AG04449 (cell line): ENCODE measurements at regions of chr11 and their contacts with region 1.

Region 1: GRCh38 chr11:66386171-66387069 is 14.9 kb upstream of the SLC29A2 start:
- DNase-seq: no peak
- H3K4me3 ChIP-seq: peak overlapping the region; percentile 35
- CTCF ChIP-seq: peak; percentile 87

Region 2: GRCh38 chr11:66288671-66289547 is 97.5 kb before region 1 on chr11 and contains the start of gene YIF1A:
- CTCF ChIA-PET with region 1: interaction called, 11 read pairs
- POLR2A ChIA-PET with region 1: no interaction called
- DNase-seq: peak; percentile 98
- H3K4me3 ChIP-seq: peak within 1 kb of the TSS; percentile 82
- CTCF ChIP-seq: no peak

Region 3: DNA sequence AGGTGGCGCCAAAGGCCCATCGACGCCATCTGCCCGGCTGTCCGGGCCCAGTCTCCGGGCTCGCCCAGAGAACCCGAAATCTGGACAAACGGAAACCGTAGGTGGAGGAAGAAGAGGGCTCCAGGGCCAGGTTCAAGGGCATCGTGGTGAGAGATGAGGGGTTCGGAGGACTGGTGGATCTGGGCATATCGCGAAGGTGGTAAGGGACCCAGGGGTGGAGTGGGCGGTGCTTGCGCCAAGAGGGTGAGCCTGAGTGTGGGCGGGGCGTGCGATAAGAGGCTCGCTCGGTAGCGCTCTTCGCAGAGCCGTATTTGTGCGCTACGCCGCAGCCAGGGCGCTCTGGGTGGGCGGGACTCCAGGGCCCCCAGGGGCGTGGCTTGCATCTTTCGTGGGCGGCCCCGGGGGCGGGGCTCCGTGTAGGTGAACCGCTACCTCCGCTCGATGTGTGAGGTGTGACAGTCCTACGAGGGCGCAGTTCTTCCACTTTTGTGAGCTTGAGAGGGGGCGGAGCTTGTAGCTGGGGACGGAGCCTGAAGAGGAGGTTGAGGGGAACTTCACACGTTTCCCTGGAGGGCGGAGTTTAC is 74.4 kb before region 1 on chr11:
- CTCF ChIA-PET with region 1: interaction called, 260 read pairs
- POLR2A ChIA-PET with region 1: interaction called, 6 read pairs
- DNase-seq: no peak
- H3K4me3 ChIP-seq: peak overlapping the region; percentile 63
- CTCF ChIP-seq: peak; percentile 90

Region 4: GRCh38 chr11:66344550-66345315 is 41.7 kb before region 1 on chr11 and contains the start of gene BRMS1:
- CTCF ChIA-PET with region 1: interaction called, 19 read pairs
- POLR2A ChIA-PET with region 1: no interaction called
- DNase-seq: peak; percentile 79
- H3K4me3 ChIP-seq: peak within 1 kb of the TSS; percentile 99
- CTCF ChIP-seq: no peak

Region 5: DNA sequence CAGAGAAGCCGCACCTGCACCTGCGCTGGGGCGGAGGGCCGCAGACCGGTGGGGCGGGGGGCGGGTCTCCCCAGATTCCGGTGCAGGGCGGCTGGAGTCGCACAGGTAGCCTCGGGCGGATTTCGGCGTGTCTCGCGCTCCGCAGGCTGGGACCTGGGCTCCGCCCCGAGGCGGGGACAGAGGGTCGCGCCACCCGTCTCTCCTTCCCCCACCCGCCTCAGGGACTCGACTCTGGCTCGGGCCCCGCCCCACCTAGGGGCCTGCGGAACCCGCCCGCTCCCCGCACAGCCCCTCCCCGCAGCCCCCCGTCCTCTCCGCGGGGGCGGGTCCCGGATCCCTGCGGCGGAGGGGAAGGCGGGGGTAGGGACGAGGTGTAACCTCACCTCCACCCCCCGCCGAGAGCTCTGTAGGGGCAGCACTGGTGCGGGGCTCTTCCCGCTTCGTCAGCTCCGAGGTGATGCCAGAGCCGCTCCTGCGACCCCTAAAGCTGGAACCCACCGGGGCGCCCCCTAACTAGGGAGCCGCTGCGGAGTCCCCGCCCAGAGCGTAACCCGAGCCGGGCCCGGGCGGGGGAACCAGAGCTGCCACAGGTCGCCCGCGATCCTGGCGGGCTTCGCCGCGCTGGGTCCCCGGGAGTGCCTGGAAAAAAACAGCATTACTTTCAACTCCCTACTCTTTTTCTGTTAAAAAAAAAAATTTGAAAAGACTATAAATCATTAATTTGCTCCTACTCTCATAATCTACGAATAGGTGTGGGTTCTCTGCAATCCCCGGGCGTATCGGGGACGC is 14.6 kb before region 1 on chr11 and contains the start of gene SLC29A2:
- CTCF ChIA-PET with region 1: interaction called, 197 read pairs
- POLR2A ChIA-PET with region 1: no interaction called
- DNase-seq: no peak
- H3K4me3 ChIP-seq: peak within 1 kb of the TSS; percentile 61
- CTCF ChIP-seq: no peak

Region 6: GRCh38 chr11:66421492-66422205 is 35.2 kb after region 1 on chr11:
- CTCF ChIA-PET with region 1: interaction called, 1,169 read pairs
- POLR2A ChIA-PET with region 1: no interaction called
- DNase-seq: no peak
- H3K4me3 ChIP-seq: no peak overlapping the region
- CTCF ChIP-seq: no peak

Region 7: GRCh38 chr11:66438504-66439466 is 52.4 kb after region 1 on chr11 and contains the start of gene MRPL11:
- CTCF ChIA-PET with region 1: interaction called, 1,169 read pairs
- POLR2A ChIA-PET with region 1: no interaction called
- DNase-seq: peak; percentile 67
- H3K4me3 ChIP-seq: peak within 1 kb of the TSS; percentile 85
- CTCF ChIP-seq: peak; percentile 79